Left cardiac atrium (tissue), 4 donors: ENCODE measurements at regions of chr12 and their contacts with region 1.

Region 1: DNA sequence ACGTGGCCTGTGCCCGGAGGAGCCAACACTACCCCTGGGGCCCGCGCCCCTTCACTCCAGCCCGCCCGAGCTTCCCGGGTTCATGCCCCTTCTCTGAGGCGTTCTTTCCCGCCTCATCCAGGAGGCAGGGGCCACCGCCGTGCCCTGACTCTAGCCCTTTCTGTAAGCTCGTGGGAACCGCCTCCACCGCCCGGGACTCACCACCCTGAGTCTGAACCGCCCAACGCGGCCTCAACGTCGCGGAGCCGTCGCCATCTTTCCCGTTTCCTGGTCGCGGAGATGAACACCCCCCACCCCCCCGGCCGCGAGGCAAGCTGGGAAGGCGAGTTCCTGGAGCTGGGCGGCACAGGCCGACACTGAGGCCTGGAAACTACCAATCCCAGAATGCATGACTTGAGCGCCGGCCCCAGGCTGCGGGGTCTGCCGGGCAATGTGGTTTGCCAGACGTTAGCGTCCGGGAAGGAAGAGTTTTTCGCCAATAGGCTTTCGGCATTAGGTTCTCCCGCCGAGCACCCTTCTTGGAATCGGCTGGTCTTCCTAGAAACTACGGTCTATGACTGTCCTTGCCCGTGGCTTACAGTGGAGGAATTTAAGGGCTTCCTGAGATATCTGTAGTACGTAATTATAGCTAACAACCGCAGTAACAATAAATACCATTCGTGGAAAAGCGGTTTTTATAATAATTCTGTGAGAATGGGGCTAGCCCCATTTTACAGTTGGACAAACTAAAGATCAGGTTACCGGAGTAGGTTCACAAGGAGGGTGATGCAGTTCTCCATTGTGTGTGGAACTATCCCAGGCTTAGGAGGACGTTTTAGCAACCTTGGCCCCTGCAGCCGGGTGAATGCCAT is at the start of gene DDX23:
- DNase-seq: peak; percentile 95
- ATAC-seq: peak; percentile 99
- total RNA-seq, gene DDX23: 34.7 to 37.5 TPM

Region 2: DNA sequence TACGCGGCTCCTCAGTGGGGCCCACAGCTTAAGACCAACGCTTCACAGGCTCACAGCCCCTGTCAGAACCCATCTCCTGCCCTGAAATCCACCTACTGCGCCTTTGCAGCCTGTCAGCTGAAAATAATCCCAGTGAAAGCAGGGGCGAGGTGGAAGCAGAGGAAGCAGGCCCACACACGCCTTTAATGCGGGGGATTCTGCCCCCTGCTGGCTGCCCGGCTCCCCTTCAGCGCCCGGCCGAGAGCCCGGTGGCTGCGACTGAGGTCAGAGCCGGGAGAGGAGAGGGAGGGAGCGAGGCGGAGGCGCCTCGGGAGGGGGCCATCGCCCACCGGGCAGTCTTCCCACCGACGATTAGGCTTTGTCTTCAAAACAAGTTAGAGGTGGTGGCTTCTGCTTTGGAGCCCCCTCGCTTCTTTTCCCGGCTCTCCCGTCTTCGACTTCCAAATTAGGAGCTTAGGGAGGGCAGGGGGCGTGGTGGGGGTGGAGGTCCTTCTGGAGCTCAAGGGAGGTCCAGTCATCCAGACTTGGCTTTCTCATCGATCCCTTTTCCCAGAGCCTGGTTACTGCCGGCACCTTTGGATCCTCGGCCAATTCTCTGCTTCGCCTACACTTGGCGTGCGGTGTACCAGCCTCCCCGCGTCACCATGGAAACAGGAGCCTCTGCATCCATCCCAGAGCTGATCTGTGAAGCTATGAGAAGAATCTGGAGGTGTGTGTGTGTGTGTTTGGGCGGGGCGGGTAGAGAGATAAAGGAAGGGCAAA is 38.7 kb after region 1 on chr12:
- intact Hi-C with region 1: loop called (anchors 2 to 5 kb)
- DNase-seq: peak; percentile 82
- ATAC-seq: peak; percentile 99

Region 3: GRCh38 chr12:48936379-48936979 is 84.4 kb after region 1 on chr12:
- intact Hi-C with region 1: loop called (anchors 5 to 10 kb)
- DNase-seq: peak; percentile 79
- ATAC-seq: peak; percentile 74 to 77

Region 4: DNA sequence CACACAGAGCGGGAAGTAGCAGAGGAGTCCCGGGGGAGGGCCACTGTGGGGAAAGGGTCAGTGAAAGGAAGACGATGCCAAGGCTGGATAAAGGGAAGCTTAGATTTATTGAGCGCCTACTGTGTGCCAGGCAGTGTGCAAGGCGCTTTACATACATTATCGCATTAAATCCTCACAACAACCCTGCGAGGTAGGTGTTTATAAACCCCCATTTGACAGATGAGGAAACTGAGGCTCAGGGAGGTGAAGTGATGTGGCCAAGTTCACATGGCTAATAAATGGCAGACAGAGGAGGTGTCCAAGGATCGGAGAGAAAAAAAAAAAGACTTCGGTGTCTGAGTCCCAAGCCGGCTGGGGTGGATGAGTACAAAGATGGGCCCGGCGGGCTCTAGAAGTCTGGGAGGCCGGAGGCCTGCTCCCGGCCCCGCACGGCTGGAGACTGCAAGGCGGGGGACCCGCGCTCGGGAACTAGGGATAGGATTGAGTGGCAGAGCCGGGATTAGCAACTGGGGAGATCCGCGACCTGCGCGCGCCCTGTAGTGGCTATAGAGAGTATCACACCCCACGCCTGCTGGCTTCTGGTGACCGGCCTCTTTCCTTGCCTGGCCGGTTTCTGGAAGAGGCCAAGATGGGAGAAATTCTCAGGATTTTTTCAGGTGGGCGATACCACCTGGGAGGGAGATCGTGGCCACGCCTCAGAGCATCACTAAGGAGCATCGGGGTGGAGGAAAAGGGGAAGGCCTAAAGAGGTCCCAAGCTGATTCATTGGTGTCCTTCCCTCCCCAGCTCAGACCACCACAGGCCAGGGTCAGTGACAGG is 143.2 kb after region 1 on chr12:
- intact Hi-C with region 1: loop called (anchors 5 to 10 kb)
- DNase-seq: peak; percentile 89
- ATAC-seq: peak; percentile 75 to 79